ENCODE measurements at regions of chr12 and their contacts with region 1.

Region 1: GRCh38 chr12:92145731-92146496 is at the start of gene BTG1:
- DNase-seq: peak; percentile 99
- H3K4me3 Mint-ChIP-seq: peak within 1 kb of the TSS; percentile 94
- H3K27ac Mint-ChIP-seq: peak within 1 kb of the TSS; percentile 97
- H3K4me1 Mint-ChIP-seq: peaks cover 51% of the 10 kb centered on the region
- H3K27me3 Mint-ChIP-seq: peaks cover 2% of the 10 kb centered on the region
- total RNA-seq, gene BTG1: 86.4 and 87.9 TPM in 2 replicates

Region 2: GRCh38 chr12:91382081-91382543 is 763.8 kb before region 1 on chr12:
- intact Hi-C with region 1: loop called (anchors 1 kb)
- DNase-seq: peak; percentile 68
- H3K4me3 Mint-ChIP-seq: peak overlapping the region; percentile 76
- H3K27ac Mint-ChIP-seq: no peak overlapping the region
- H3K4me1 Mint-ChIP-seq: peaks cover 10% of the 10 kb centered on the region
- H3K27me3 Mint-ChIP-seq: peaks cover 5% of the 10 kb centered on the region

Region 3: DNA sequence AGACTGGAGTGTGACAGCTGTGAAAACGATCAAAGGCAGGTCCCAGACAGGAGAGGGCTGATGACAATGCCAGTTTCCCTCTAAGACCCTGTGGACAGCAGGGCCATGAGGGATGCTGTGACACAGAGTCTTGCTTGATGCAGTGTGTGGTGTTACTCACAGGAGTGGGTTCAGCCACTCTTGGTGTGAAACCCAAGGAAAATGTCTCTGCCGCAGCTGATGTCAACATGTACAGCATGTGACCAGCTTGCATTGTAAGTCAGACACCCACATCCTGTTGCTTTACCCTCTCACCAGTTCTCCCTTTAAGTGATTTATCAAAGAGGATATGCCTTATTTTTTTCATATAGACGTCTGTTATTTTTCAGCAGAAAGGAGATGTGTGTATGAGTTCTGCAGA is 268.9 kb before region 1 on chr12:
- intact Hi-C with region 1: loop called (anchors 1 kb)
- DNase-seq: peak; percentile 81
- H3K4me3 Mint-ChIP-seq: peak overlapping the region; percentile 66
- H3K27ac Mint-ChIP-seq: peak overlapping the region; percentile 95
- H3K4me1 Mint-ChIP-seq: peaks cover 66% of the 10 kb centered on the region
- H3K27me3 Mint-ChIP-seq: no peaks in the 10 kb centered on the region

Region 4: DNA sequence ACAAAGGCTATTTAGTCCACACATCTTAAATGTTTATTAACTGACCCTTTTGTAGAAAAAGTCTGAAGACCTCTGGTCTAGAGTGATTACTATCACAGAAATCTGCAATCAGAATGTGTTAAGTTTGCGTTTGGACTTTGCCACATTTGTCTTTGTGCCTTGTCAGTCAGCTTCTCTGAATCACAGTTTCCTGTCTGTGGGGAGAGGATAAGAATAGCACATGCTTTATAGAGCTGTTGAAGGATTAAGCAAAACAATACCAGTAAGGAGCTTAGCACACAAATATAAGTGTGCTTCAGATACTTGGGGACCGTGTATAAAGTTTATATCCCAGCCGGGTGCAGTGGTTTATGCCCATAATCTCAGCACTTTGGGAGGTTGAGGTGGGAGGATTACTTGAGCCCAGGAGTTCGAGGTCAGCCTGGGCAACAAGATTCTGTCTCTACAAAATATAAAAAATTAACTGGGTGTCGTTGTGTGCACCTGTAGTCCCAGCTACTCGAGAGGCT is 62.8 kb after region 1 on chr12:
- intact Hi-C with region 1: loop called (anchors 1 kb)
- DNase-seq: peak; percentile 26
- H3K4me3 Mint-ChIP-seq: peak overlapping the region; percentile 72
- H3K27ac Mint-ChIP-seq: peak overlapping the region; percentile 94
- H3K4me1 Mint-ChIP-seq: peaks cover 46% of the 10 kb centered on the region
- H3K27me3 Mint-ChIP-seq: no peaks in the 10 kb centered on the region

Region 5: GRCh38 chr12:92469837-92470236 is 323.9 kb after region 1 on chr12:
- intact Hi-C with region 1: loop called (anchors 1 kb)
- DNase-seq: no peak
- H3K4me3 Mint-ChIP-seq: no peak overlapping the region
- H3K27ac Mint-ChIP-seq: peak overlapping the region; percentile 81
- H3K4me1 Mint-ChIP-seq: peaks cover 30% of the 10 kb centered on the region
- H3K27me3 Mint-ChIP-seq: no peaks in the 10 kb centered on the region

Region 6: DNA sequence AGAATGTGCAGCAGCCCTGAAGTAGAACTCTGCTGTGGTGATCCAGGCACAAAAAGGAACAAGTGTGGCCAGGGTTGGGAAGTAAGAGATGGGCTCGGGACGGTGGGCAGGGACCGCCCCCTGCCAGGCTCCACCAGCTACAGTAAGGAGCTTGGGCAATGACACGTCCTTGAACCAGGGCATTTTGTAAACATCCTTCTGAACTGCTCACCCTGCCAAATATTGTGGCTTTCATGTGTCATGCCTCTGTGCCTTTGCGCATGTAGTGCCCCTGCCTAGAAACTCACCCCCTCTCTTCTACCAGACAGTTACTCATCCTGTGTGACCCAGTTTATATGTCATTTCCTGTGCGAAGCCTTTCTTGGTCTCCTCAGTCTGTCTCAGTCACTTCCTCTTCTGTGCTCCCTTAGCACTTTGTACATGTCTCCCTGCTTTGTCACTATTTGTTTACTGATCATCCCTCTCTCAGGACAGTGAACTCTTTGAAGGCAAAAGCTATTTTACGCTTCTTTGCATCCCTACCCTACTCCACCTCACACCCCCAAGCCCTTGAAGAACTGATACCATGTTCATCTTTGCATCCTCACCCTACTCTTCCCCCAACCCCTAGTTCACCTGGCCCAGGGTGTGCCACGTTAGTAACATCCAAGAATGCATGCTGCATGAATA is 448.0 kb after region 1 on chr12:
- intact Hi-C with region 1: loop called (anchors 2 kb)
- DNase-seq: peak; percentile 79
- H3K4me3 Mint-ChIP-seq: peak overlapping the region; percentile 72
- H3K27ac Mint-ChIP-seq: peak overlapping the region; percentile 99
- H3K4me1 Mint-ChIP-seq: peaks cover 63% of the 10 kb centered on the region
- H3K27me3 Mint-ChIP-seq: no peaks in the 10 kb centered on the region